Gastrocnemius medialis (tissue), 4 donors: ENCODE measurements at regions of chr19 and their contacts with region 1.

Region 1: DNA sequence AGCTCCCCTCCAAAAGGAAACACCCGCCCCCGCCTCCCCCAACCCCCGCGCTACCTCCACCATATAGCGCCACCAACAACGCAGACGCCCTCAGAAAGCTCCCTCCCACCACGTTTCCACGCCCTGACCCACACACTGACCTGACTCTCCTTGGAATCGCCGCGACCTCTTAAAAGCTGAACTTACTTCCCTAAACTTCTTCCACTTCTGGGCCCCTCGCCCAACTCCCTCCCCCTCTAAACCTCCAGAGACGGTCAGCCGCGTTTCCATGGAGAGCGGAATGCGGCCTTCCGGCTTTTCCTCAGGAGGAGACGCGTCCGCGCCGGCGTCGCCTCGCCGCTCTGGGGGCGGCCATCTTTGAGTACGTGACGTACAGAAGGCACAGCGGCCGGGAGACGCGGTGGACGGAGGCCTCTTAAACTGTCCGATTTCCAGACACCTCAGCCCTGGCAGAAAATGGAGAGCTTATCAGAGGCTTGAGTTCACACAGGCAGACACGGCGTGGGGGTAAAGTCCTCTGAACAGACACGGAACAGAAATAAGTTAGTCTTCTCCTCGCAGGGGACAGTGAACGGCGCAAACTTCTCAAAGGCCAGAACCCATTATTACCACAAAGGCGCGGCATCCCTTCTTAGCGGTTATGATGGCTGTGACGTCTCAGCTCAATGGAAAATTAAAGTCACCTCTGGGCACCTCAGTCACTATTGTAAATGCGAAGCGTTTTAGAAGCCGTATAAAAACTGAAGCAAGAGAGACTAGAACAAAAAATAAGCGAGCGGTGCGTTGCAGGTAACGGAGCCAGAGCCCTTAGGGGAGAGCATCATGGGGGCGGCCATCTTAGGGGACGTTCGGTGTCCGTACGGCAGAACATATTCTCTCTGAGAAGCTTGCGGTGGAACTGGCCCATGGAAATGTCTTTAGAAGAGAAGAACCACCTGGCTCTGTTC is at the start of gene ZNF432:
- DNase-seq: peak; percentile 85 to 90
- ATAC-seq: peak; percentile 95 to 98
- H3K4me3 ChIP-seq: peak within 1 kb of the TSS; percentile 54 to 88 (median 70)
- H3K27ac ChIP-seq: peak within 1 kb of the TSS; percentile 88 to 95 (median 94)
- H3K4me1 ChIP-seq: peaks cover 0 to 11% of the 10 kb centered on the region in 2 donors
- H3K27me3 ChIP-seq: no peaks in the 10 kb centered on the region
- CTCF ChIP-seq: no peak
- POLR2A ChIP-seq: peak; percentile 20 to 35
- total RNA-seq, gene ZNF432: 2.1 to 9.5 (median 4.4) TPM

Region 2: GRCh38 chr19:51904331-51905165 is 144.3 kb before region 1 on chr19 and contains the start of gene ZNF649:
- in situ Hi-C with region 1: no loop called
- intact Hi-C with region 1: loop called (anchors 5 kb)
- DNase-seq: peak; percentile 59 to 79
- ATAC-seq: peak; percentile 99 to 100
- H3K4me3 ChIP-seq: peak within 1 kb of the TSS; percentile 71 to 86 (median 78)
- H3K27ac ChIP-seq: peak within 1 kb of the TSS; percentile 80 to 92 (median 85)
- H3K4me1 ChIP-seq: peaks cover 10 to 15% of the 10 kb centered on the region in 2 donors
- H3K27me3 ChIP-seq: peaks cover 0 to 9% (median 5%) of the 10 kb centered on the region in 3 donors
- CTCF ChIP-seq: no peak
- POLR2A ChIP-seq: no peak
- total RNA-seq, gene ZNF649: 2.6 to 4.7 (median 4.1) TPM

Region 3: DNA sequence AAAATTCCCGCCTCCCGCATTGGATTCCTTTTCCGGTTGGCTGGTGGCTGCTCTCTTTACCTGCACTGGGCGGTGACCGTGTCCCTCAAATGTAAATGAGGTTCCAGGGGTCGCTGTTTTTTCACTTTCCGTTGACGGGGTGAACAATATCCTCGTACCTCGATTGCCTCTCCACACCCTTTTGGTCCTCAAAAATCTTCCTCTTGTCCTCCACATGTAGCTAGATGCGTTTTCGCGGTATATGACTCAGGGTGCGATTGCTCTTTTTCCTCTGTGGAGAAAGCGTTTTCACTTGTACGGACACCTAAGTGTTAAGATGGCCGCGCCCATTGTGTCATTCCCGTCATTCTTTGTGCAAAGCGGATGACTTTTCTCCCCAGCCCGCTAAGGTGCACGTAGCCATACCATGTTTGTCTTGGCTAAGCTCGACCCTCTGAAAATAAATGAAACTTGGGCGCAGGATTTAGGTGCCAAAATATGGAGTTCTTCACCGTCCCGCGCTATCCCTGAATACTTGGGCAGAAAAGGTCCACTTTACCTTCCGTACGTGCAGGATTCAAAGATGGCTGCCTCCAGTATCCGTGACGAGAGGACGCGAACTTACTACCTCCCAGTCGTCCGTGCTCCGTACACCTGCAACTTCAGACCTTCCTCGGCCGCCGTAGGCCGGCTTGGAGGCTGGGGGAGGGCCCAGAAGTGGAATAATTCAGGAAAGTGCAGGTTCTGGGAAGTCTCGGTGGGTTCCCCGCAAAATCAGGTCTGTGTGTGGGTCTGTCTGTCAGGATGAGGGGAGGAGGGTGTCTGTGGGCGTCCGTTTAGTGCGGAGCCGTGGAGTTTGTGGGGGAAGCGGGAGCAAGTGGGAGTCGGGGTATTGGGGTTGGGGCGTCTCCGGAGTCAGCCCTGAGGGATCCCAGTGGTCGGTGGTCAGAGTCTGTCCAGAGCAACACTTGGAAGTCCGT is 121.8 kb before region 1 on chr19 and contains the start of gene ZNF613:
- in situ Hi-C with region 1: no loop called
- intact Hi-C with region 1: loop called (anchors 1 kb)
- DNase-seq: peak; percentile 78 to 83
- ATAC-seq: peak; percentile 95
- H3K4me3 ChIP-seq: peak within 1 kb of the TSS; percentile 73 to 95 (median 88)
- H3K27ac ChIP-seq: peak within 1 kb of the TSS; percentile 76 to 91 (median 86)
- H3K4me1 ChIP-seq: peaks cover 5 to 11% of the 10 kb centered on the region in 2 donors
- H3K27me3 ChIP-seq: no peaks in the 10 kb centered on the region
- CTCF ChIP-seq: peak in 2 of 5 experiments; percentile 35
- POLR2A ChIP-seq: no peak
- total RNA-seq, gene ZNF613: 1.3 to 9.4 (median 3.8) TPM

Region 4: GRCh38 chr19:51986309-51987291 is 62.2 kb before region 1 on chr19 and contains the start of gene ZNF350:
- in situ Hi-C with region 1: no loop called
- intact Hi-C with region 1: loop called (anchors 1 kb)
- DNase-seq: peak; percentile 87 to 91
- ATAC-seq: peak; percentile 100
- H3K4me3 ChIP-seq: peak within 1 kb of the TSS; percentile 69 to 92 (median 86)
- H3K27ac ChIP-seq: peak within 1 kb of the TSS; percentile 74 to 79 (median 77)
- H3K4me1 ChIP-seq: peaks cover 8 to 9% of the 10 kb centered on the region in 2 donors
- H3K27me3 ChIP-seq: no peaks in the 10 kb centered on the region
- CTCF ChIP-seq: no peak
- POLR2A ChIP-seq: peak in 1 of 2 donors; percentile 21
- total RNA-seq, gene ZNF350: 1.7 to 6.0 (median 5.0) TPM

Region 5: DNA sequence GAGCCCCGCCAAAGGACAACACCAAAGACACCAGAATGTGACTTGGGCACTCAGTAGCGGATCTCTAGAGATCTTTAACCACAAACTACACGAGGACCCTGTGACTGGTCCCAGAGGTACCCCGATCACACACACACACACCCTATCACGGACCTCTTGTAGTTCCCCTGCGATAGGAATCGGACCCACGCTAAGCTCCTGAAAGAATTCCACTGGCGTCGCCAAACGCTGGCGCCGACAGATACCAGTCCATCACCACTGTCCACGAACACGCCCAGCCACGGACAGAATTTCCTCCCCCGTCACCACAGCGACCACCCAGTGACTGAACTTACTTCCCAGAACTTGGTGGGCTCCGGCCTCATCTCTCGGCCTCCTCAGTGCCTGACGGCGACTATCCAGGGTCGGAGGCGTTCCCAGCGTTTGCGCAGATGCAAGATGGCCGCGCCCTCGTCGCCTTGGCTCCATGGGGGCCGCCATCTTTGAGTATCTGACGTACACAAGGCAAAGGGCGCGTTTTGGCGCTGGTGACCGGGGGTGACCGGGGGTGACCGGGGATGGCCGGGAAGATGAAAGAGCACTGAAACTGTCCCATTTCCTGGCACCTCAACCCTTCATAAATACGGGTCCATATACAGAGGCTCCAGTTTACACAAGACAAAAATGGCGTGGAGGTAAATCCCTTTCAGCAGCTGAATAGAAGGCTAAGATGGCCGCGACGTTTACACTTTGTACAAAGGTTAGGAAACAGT is 40.8 kb before region 1 on chr19 and contains the start of gene ZNF615:
- in situ Hi-C with region 1: no loop called
- intact Hi-C with region 1: loop called (anchors 1 kb)
- DNase-seq: peak; percentile 77 to 81
- ATAC-seq: peak; percentile 94 to 98
- H3K4me3 ChIP-seq: peak within 1 kb of the TSS; percentile 82 to 97 (median 88)
- H3K27ac ChIP-seq: peak within 1 kb of the TSS; percentile 75 to 86 (median 82)
- H3K4me1 ChIP-seq: peaks cover 0 to 5% of the 10 kb centered on the region in 2 donors
- H3K27me3 ChIP-seq: no peaks in the 10 kb centered on the region
- CTCF ChIP-seq: no peak
- POLR2A ChIP-seq: peak; percentile 10 to 14
- total RNA-seq, gene ZNF615: 5.6 to 8.9 (median 7.4) TPM

Region 6: GRCh38 chr19:52028027-52028779 is 20.6 kb before region 1 on chr19 and contains the start of gene ZNF614:
- in situ Hi-C with region 1: no loop called
- intact Hi-C with region 1: loop called (anchors 1 kb)
- DNase-seq: peak; percentile 68 to 80
- ATAC-seq: peak; percentile 98
- H3K4me3 ChIP-seq: peak within 1 kb of the TSS; percentile 77 to 87 (median 82)
- H3K27ac ChIP-seq: peak within 1 kb of the TSS; percentile 90 to 95 (median 92)
- H3K4me1 ChIP-seq: peaks cover 7 to 10% of the 10 kb centered on the region in 2 donors
- H3K27me3 ChIP-seq: no peaks in the 10 kb centered on the region
- CTCF ChIP-seq: no peak
- POLR2A ChIP-seq: peak; percentile 17 to 41
- total RNA-seq, gene ZNF614: 3.9 to 4.6 (median 3.9) TPM

Region 7: GRCh38 chr19:52369559-52370340 is 320.9 kb after region 1 on chr19 and contains the start of gene ZNF880:
- in situ Hi-C with region 1: no loop called
- intact Hi-C with region 1: loop called (anchors 2 kb)
- DNase-seq: peak; percentile 73 to 82
- ATAC-seq: peak; percentile 95 to 99
- H3K4me3 ChIP-seq: peak within 1 kb of the TSS; percentile 69 to 85 (median 79)
- H3K27ac ChIP-seq: peak within 1 kb of the TSS; percentile 82 to 88 (median 85)
- H3K4me1 ChIP-seq: peaks cover 0 to 6% of the 10 kb centered on the region in 2 donors
- H3K27me3 ChIP-seq: no peaks in the 10 kb centered on the region
- CTCF ChIP-seq: no peak
- POLR2A ChIP-seq: peak in 1 of 2 donors; percentile 39
- total RNA-seq, gene ZNF880: 6.1 to 12.7 (median 7.9) TPM